Heart left ventricle (tissue), 16 donors: ENCODE measurements at regions of chr7 and their contacts with region 1.

Region 1: GRCh38 chr7:901381-902154 is 25.2 kb downstream of the GET4 start:
- DNase-seq: peak; percentile 50 to 87 (median 72)
- ATAC-seq: peak; percentile 44 to 69 (median 62)
- H3K4me3 ChIP-seq: no peak overlapping the region
- H3K27ac ChIP-seq: no peak overlapping the region
- H3K4me1 ChIP-seq: peaks cover 0 to 36% (median 14%) of the 10 kb centered on the region in 12 donors
- H3K27me3 ChIP-seq: peaks cover 0 to 18% (median 3%) of the 10 kb centered on the region in 9 donors
- CTCF ChIP-seq: no peak
- POLR2A ChIP-seq: no peak

Region 2: GRCh38 chr7:954330-955238 is 53.0 kb after region 1 on chr7 and contains the start of gene ADAP1:
- intact Hi-C with region 1: loop called in 2 of 10 experiments (anchors 5 to 10 kb)
- DNase-seq: peak in 4 of 5 donors; percentile 45 to 78 (median 61)
- ATAC-seq: peak in 3 of 4 donors; percentile 50 to 62 (median 57)
- H3K4me3 ChIP-seq: peak within 1 kb of the TSS; percentile 34 to 73 (median 57)
- H3K27ac ChIP-seq: peak within 1 kb of the TSS in 6 of 12 donors; percentile 14 to 79 (median 42)
- H3K4me1 ChIP-seq: peaks cover 0 to 44% (median 9%) of the 10 kb centered on the region in 12 donors
- H3K27me3 ChIP-seq: peaks cover 0 to 27% (median 8%) of the 10 kb centered on the region in 9 donors
- CTCF ChIP-seq: peak in 5 of 12 donors; percentile 4 to 41 (median 16)
- POLR2A ChIP-seq: no peak
- total RNA-seq, gene ADAP1: 7.0 to 16.5 (median 12.0) TPM

Region 3: DNA sequence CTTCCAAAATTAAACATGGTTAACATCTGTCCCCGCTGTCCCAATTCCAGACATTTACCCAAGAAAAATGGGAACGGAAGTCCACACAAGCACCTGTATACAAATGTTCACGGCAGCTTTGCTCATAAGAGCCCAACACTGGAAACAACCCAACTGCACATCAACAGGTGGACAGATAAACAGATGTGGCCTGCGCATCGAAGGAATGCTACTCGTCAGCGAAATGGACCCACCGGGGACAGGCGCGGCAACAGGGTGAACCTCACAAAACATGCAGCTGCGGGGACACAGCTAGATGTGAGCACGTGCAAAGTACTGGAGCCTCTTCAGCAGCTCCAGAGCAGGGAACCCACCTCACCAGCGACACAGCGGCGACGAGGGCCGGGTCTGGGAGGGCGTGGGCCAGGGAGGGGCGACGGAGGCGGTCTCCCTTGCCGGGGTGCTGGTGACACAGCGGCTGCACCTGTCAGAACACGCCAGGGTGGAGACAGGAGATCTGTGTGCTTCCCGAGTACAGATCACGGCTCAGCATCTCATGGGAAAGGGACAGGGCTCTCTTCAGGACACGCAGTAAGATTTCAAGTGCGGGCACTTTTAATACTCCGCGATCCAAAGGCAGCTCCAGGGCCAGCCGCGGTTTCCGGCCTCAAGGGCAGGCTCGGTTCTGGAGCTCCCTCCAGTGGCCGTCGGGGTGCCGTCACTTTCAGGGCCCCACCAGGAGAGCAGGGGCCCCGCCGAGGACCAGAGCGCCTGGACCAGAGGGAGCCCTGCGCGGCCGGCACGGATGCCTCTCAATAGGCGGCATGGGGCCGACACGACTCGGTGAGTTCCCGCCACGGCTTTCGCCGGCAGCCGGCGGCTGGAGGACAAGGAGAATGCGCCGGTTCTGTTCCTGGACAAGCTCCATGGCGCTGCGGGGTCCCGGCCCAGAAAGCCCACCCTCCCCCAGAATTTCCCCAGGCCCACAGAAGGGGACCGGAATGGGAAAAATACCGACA is 164.0 kb after region 1 on chr7:
- intact Hi-C with region 1: loop called in 2 of 10 experiments (anchors 10 kb)
- DNase-seq: peak; percentile 84 to 93 (median 86)
- ATAC-seq: peak; percentile 81 to 97 (median 93)
- H3K4me3 ChIP-seq: peak overlapping the region in 10 of 12 donors; percentile 12 to 50 (median 26)
- H3K27ac ChIP-seq: no peak overlapping the region
- H3K4me1 ChIP-seq: peaks cover 2 to 22% (median 18%) of the 10 kb centered on the region in 12 donors
- H3K27me3 ChIP-seq: no peaks in the 10 kb centered on the region
- CTCF ChIP-seq: peak; percentile 89 to 99 (median 96)
- POLR2A ChIP-seq: peak in 1 of 2 donors; percentile 21

Region 4: DNA sequence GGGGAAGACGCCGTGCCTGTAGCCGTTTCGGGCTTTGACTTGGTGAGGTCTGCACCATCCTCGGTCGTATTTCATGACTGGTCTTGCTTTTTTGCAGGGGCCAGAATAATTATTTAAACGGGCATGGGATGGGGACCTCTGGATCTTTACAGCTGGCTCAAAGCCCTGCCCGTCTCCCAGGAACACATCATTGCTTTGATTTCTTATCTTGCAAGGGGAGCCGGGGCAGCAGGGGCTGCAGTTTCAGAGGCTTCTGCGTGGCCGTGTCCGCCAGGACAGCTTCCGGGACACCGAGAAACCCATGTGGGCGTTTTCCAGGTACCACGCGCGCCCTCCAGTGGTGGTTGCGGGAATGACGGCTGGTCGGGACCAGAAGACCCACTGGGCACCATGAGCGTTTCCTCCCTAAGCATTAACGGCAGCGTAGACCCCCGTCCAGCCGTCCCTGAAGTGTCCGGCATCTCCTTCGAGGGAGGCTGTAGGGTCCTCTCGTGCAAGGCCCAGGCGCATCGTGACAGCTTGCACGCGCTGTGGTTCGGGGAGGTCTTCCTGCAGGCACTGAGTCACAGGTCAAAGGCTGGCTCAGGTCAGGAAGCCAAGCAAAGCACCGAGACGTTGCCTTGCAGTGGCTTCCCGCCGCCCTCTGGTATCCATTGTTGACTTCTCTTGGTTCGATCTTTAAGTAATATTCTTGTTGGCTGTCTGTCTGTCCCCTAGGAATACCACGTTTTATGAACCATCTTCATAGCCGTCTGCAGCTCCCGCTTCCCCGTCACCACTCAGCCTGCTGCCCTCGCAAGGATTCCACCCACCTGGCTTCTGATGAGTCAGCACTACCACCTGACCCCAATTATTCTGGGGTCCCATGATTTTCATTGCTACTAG is 274.6 kb after region 1 on chr7:
- intact Hi-C with region 1: loop called in 1 of 10 experiments (anchors 10 kb)
- DNase-seq: peak; percentile 71 to 92 (median 81)
- ATAC-seq: peak in 3 of 4 donors; percentile 66 to 85 (median 85)
- H3K4me3 ChIP-seq: peak overlapping the region in 9 of 12 donors; percentile 7 to 39 (median 28)
- H3K27ac ChIP-seq: peak overlapping the region in 2 of 12 donors; percentile 33 to 47
- H3K4me1 ChIP-seq: peaks cover 0 to 13% (median 5%) of the 10 kb centered on the region in 12 donors
- H3K27me3 ChIP-seq: no peaks in the 10 kb centered on the region
- CTCF ChIP-seq: peak; percentile 82 to 95 (median 89)
- POLR2A ChIP-seq: no peak